ENCODE measurements at regions of chr10 and their contacts with region 1.

Region 1: GRCh38 chr10:88791924-88792323 is 10.6 kb upstream of the LIPM start:
- DNase-seq: peak; percentile 9
- ATAC-seq: peak; percentile 41
- H3K4me3 Mint-ChIP-seq: no peak overlapping the region
- H3K27ac Mint-ChIP-seq: no peak overlapping the region
- H3K4me1 Mint-ChIP-seq: peaks cover 30% of the 10 kb centered on the region
- H3K27me3 Mint-ChIP-seq: peaks cover 1% of the 10 kb centered on the region
- CTCF ChIP-seq: peak; percentile 57

Region 2: DNA sequence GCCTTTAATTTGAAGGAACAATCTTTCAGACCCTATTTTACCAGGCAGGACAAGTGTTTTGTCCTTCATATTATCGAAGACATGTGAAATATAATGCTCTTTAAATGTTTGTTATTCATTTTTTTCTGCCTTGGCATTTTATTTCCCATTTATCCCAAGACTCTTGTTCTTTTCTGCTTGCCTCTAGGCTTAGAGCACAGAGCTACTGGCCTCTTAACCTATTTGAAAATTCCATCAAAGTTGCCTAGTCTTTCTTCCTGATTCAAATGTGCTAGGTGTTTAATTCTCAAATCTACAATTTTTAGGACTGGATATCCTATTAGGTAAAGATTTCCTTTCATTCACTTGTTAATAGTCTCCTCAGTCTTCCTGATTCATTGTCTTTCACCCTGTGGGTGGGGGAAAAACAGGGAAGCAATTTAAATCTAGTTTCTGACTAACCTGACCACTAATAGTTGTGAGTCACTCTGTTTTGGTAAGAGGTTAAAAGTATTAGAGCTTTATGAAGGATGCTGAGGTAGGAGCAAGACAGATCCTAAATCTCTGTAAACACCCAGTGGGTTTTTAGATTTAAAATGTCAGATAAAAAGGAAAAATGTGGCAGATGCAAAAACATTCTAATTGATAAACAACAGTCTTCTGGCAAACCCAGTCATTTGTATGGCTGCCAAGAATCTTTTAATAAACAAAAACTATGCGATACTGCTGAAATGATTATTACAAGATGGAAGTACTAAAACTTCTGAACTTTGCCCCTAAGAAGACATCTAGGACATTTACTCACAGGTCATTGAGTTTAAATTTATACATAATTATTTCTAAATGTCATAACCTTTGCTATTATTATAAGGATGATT is 84.3 kb before region 1 on chr10:
- CTCF ChIA-PET with region 1: no interaction called
- POLR2A ChIA-PET with region 1: no interaction called
- intact Hi-C with region 1: loop called (anchors 2 kb)
- DNase-seq: peak; percentile 39
- ATAC-seq: peak; percentile 69
- H3K4me3 Mint-ChIP-seq: no peak overlapping the region
- H3K27ac Mint-ChIP-seq: no peak overlapping the region
- H3K4me1 Mint-ChIP-seq: peaks cover 29% of the 10 kb centered on the region
- H3K27me3 Mint-ChIP-seq: peaks cover 4% of the 10 kb centered on the region
- CTCF ChIP-seq: no peak